ENCODE measurements at regions of chr15 and their contacts with region 1.

Region 1: GRCh38 chr15:84716036-84716799 is at the start of gene SEC11A:
- DNase-seq: peak; percentile 93
- ATAC-seq: peak; percentile 93
- H3K4me3 Mint-ChIP-seq: peak within 1 kb of the TSS; percentile 99
- H3K27ac Mint-ChIP-seq: peak within 1 kb of the TSS; percentile 100
- H3K4me1 Mint-ChIP-seq: peaks cover 42% of the 10 kb centered on the region
- H3K27me3 Mint-ChIP-seq: no peaks in the 10 kb centered on the region
- total RNA-seq, gene SEC11A: 97.1 to 99.1 TPM

Region 2: GRCh38 chr15:84658080-84658787 is 58.0 kb before region 1 on chr15 and contains the start of gene NMB:
- POLR2A ChIA-PET with region 1: interaction called, 14 read pairs
- DNase-seq: peak; percentile 86
- ATAC-seq: peak; percentile 71
- H3K4me3 Mint-ChIP-seq: peak within 1 kb of the TSS; percentile 80
- H3K27ac Mint-ChIP-seq: peak within 1 kb of the TSS; percentile 73
- H3K4me1 Mint-ChIP-seq: peaks cover 14% of the 10 kb centered on the region
- H3K27me3 Mint-ChIP-seq: no peaks in the 10 kb centered on the region
- total RNA-seq, gene NMB: 1.1 to 1.7 TPM

Region 3: GRCh38 chr15:84748274-84749110 is 32.3 kb after region 1 on chr15 and contains the start of gene ZNF592:
- POLR2A ChIA-PET with region 1: interaction called, 81 read pairs
- DNase-seq: peak; percentile 91
- ATAC-seq: peak; percentile 62
- H3K4me3 Mint-ChIP-seq: peak within 1 kb of the TSS; percentile 97
- H3K27ac Mint-ChIP-seq: peak within 1 kb of the TSS; percentile 96
- H3K4me1 Mint-ChIP-seq: peaks cover 53% of the 10 kb centered on the region
- H3K27me3 Mint-ChIP-seq: no peaks in the 10 kb centered on the region
- total RNA-seq, gene ZNF592: 35.6 TPM